ENCODE measurements at regions of chr1 and their contacts with region 1.

Region 1: DNA sequence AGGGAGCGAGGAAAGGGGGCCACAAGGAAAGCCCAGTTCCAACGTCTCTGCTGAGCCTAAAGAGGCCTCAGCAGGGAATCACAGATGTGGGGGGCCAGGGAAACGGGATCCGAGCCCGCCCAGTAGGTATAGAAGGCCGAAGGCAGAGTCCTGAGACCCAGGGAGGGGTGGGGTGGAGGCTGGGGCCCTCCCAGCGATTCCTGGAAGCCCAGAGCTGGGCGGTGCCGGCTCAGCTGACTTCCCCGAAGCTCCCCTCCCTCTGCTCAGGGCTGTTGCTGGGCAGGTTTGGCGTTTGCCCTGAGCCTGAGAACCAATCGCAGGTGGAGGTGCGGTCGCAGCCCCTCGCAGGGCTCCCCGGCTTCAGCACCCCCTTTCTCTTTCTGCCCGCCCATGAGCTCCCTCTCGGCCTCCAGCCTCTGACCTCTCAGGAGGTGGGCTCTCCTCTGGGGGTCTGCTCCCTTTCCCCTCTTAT is 12.8 kb downstream of the ADAMTSL4 start:
- DNase-seq: peak; percentile 86
- H3K4me3 Mint-ChIP-seq: peak overlapping the region; percentile 97
- H3K27ac Mint-ChIP-seq: peak overlapping the region; percentile 100
- H3K4me1 Mint-ChIP-seq: peaks cover 44% of the 10 kb centered on the region
- H3K27me3 Mint-ChIP-seq: no peaks in the 10 kb centered on the region

Region 2: GRCh38 chr1:150464422-150464826 is 97.6 kb before region 1 on chr1:
- intact Hi-C with region 1: loop called (anchors 1 kb)
- DNase-seq: peak; percentile 53
- H3K4me3 Mint-ChIP-seq: no peak overlapping the region
- H3K27ac Mint-ChIP-seq: no peak overlapping the region
- H3K4me1 Mint-ChIP-seq: peaks cover 2% of the 10 kb centered on the region
- H3K27me3 Mint-ChIP-seq: no peaks in the 10 kb centered on the region

Region 3: DNA sequence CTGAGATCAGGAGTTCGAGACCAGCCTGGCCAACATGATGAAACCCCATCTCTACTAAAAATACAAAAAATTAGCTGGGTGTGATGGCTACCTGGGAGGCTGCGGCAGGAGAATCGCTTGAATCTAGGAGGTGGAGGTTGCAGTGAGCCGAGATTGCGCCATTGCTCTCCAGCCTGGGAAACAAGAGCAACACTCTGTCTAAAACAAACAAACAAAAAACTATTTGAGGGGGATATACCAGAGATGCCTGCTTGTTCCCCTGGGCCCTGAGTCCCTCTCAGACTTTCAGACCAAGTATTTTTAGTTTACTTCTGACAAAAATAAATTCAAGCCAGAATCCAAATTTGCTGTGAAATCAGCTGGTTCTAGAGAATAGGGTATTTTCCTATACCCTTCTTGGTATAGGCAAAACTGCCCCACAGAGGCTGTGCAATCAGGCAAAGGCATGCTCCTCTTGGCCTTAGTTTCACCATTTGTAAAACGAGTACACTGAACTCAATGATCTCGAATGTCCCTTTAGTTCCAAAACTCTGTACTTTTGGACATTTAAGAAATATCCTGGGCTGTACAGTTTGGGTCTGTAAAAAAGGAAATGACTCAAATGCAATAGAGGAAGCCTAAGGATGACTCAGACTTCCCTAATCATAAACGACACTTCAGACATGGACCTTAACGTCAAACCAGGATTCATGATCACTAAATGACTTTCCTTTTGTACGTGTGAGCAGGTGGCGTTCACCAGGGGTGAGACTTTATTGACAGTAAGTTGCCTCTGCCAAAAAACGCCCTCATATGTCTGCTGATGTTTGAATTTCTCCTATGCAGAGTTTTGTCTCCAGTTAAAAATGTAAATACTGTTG is 51.3 kb after region 1 on chr1:
- intact Hi-C with region 1: loop called (anchors 1 kb)
- DNase-seq: peak; percentile 32
- H3K4me3 Mint-ChIP-seq: peak overlapping the region; percentile 23
- H3K27ac Mint-ChIP-seq: peak overlapping the region; percentile 90
- H3K4me1 Mint-ChIP-seq: peaks cover 56% of the 10 kb centered on the region
- H3K27me3 Mint-ChIP-seq: no peaks in the 10 kb centered on the region

Region 4: GRCh38 chr1:150629115-150629928 is 67.3 kb after region 1 on chr1 and contains the start of gene ENSA:
- intact Hi-C with region 1: loop called (anchors 1 kb)
- DNase-seq: peak; percentile 96
- H3K4me3 Mint-ChIP-seq: no peak within 1 kb of the TSS
- H3K27ac Mint-ChIP-seq: no peak within 1 kb of the TSS
- H3K4me1 Mint-ChIP-seq: peaks cover 41% of the 10 kb centered on the region
- H3K27me3 Mint-ChIP-seq: no peaks in the 10 kb centered on the region
- total RNA-seq, gene ENSA: 252 and 253 TPM in 2 replicates

Region 5: DNA sequence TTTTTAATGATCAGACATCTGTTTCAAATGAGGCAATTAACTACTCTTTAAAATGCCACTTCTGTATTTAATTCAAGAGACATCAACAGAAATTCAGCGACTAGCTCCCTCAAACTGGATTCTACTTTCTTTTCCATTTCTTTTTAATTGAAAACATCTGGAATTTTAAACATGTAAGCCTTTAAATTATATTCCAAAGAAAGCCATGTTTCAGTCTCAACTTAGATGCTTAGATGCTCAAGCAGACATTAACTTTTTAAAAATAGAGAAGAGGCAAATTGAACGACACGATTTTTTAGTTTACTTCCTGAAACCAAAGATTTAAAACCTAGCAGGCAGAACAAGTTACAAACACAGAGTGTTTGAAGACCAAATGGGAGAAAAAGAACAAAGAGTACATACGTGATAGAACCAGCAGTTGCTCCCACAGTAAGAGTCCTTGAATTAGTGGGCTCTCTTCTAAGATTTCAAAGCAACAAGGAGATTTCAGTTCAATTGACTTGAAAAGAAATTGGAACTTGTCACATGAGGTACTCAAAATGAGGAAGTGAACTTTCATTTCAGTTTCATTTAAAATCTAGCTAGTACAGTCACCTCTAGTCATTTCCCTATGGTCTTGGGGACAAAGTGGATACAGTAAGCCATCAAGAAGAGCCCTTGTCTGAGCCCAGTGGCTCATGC is 203.4 kb after region 1 on chr1 and contains the start of gene CTSS:
- intact Hi-C with region 1: loop called (anchors 10 kb)
- DNase-seq: no peak
- H3K4me3 Mint-ChIP-seq: peak within 1 kb of the TSS; percentile 85
- H3K27ac Mint-ChIP-seq: peak within 1 kb of the TSS; percentile 88
- H3K4me1 Mint-ChIP-seq: peaks cover 27% of the 10 kb centered on the region
- H3K27me3 Mint-ChIP-seq: peaks cover 1% of the 10 kb centered on the region
- total RNA-seq, gene CTSS: 42.0 and 42.1 TPM in 2 replicates

Region 6: GRCh38 chr1:150979092-150980056 is 417.4 kb after region 1 on chr1:
- intact Hi-C with region 1: loop called (anchors 2 kb)
- DNase-seq: peak; percentile 81
- H3K4me3 Mint-ChIP-seq: no peak overlapping the region
- H3K27ac Mint-ChIP-seq: peak overlapping the region; percentile 5
- H3K4me1 Mint-ChIP-seq: peaks cover 26% of the 10 kb centered on the region
- H3K27me3 Mint-ChIP-seq: no peaks in the 10 kb centered on the region

Region 7: DNA sequence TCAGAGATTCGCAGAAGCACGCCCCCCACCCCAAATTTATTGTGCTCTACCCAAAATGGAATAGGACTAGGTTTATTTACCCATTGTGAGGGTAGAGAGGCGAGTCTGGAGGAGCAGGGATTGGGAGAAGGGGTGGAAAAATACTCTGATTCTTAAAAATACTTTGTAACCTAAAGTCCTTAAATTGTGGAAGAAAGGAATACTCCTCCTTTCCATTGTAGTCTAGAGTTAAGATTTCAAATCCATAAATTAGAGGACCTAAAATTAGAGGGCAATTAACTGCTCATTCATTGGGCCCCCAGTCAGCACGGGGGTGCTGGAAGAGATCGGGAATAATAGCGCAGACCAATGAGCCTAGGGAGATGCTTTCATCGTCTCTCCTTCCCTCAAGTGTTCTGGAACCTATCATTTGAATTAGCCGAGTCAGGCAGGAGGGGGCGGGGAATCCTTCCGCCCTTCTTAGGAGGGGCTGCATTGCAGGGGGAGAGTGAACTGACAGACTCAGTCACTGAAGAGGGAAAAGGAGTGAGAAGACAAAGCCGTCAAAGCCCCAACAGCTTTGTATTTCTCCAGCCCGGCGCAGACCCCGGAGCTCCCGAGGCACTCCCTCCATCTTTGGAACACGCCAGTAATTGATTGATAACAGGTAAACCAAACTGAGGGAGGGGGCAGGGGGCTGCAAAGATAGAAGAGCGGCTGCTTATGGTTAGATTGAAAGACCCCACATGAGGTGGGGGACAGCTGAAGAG is 498.1 kb after region 1 on chr1 and contains the start of gene MLLT11:
- intact Hi-C with region 1: no loop called
- DNase-seq: no peak
- H3K4me3 Mint-ChIP-seq: peak within 1 kb of the TSS; percentile 90
- H3K27ac Mint-ChIP-seq: peak within 1 kb of the TSS; percentile 96
- H3K4me1 Mint-ChIP-seq: peaks cover 56% of the 10 kb centered on the region
- H3K27me3 Mint-ChIP-seq: no peaks in the 10 kb centered on the region
- total RNA-seq, gene MLLT11: 3.7 and 3.8 TPM in 2 replicates

Region 8: DNA sequence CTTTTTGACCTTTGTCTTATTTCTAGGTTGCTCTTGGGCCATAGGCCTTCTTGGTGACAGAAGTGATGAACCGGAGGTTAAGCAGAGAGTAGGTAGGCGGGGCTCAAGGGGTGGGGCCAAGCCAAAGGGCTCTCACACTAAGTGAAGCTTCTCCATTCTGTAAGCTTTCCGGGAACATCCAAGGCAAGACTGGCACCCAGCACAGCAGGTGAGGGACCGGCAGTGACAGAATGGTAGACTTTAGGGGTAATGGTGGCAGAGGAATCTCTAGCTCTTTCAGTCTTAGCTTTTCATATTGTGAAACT is 594.5 kb after region 1 on chr1 and contains the start of gene TNFAIP8L2:
- intact Hi-C with region 1: loop called (anchors 5 kb)
- DNase-seq: peak; percentile 71
- H3K4me3 Mint-ChIP-seq: peak within 1 kb of the TSS; percentile 99
- H3K27ac Mint-ChIP-seq: peak within 1 kb of the TSS; percentile 99
- H3K4me1 Mint-ChIP-seq: peaks cover 37% of the 10 kb centered on the region
- H3K27me3 Mint-ChIP-seq: no peaks in the 10 kb centered on the region
- total RNA-seq, gene TNFAIP8L2: 24.3 and 28.7 TPM in 2 replicates

Measured in activated T-helper 2 cell treated with anti-CD3 and anti-CD28 coated beads, Interferon-gamma antibody, Interleukin-2, Interleukin-4, amounts not matched to agents 10 μg/mL and 5 μg/mL and 100 μg/mL, durations not matched to agents 14 hours and 24 hours and 36 hours (primary cell).